ENCODE measurements at regions of chr7 and their contacts with region 1.

Region 1: GRCh38 chr7:107563775-107564552 is at the starts of genes COG5 and DUS4L:
- DNase-seq: peak; percentile 58 to 78
- H3K4me3 ChIP-seq: peak within 1 kb of the TSS; percentile 92
- H3K27ac ChIP-seq: peak within 1 kb of the TSS; percentile 89
- H3K4me1 ChIP-seq: peaks cover 41% of the 10 kb centered on the region
- H3K27me3 ChIP-seq: no peaks in the 10 kb centered on the region
- CTCF ChIP-seq: no peak
- total RNA-seq, gene COG5: 32.3 and 43.5 TPM in 2 replicates
- total RNA-seq, gene DUS4L: 22.0 and 25.2 TPM in 2 replicates

Region 2: GRCh38 chr7:107168233-107169119 is 395.5 kb before region 1 on chr7 and contains the start of gene HBP1:
- CTCF ChIA-PET with region 1: no interaction called
- POLR2A ChIA-PET with region 1: interaction called, 12 read pairs
- intact Hi-C with region 1: no loop called
- DNase-seq: peak; percentile 99
- H3K4me3 ChIP-seq: peak within 1 kb of the TSS; percentile 77
- H3K27ac ChIP-seq: peak within 1 kb of the TSS; percentile 86
- H3K4me1 ChIP-seq: peaks cover 26% of the 10 kb centered on the region
- H3K27me3 ChIP-seq: no peaks in the 10 kb centered on the region
- CTCF ChIP-seq: no peak
- total RNA-seq, gene HBP1: 60.0 and 62.1 TPM in 2 replicates

Region 3: GRCh38 chr7:107462740-107463444 is 101.1 kb before region 1 on chr7:
- CTCF ChIA-PET with region 1: no interaction called
- POLR2A ChIA-PET with region 1: no interaction called
- intact Hi-C with region 1: loop called (anchors 5 kb)
- DNase-seq: peak; percentile 60 to 65
- H3K4me3 ChIP-seq: no peak overlapping the region
- H3K27ac ChIP-seq: no peak overlapping the region
- H3K4me1 ChIP-seq: peaks cover 8% of the 10 kb centered on the region
- H3K27me3 ChIP-seq: no peaks in the 10 kb centered on the region
- CTCF ChIP-seq: peak; percentile 90

Region 4: DNA sequence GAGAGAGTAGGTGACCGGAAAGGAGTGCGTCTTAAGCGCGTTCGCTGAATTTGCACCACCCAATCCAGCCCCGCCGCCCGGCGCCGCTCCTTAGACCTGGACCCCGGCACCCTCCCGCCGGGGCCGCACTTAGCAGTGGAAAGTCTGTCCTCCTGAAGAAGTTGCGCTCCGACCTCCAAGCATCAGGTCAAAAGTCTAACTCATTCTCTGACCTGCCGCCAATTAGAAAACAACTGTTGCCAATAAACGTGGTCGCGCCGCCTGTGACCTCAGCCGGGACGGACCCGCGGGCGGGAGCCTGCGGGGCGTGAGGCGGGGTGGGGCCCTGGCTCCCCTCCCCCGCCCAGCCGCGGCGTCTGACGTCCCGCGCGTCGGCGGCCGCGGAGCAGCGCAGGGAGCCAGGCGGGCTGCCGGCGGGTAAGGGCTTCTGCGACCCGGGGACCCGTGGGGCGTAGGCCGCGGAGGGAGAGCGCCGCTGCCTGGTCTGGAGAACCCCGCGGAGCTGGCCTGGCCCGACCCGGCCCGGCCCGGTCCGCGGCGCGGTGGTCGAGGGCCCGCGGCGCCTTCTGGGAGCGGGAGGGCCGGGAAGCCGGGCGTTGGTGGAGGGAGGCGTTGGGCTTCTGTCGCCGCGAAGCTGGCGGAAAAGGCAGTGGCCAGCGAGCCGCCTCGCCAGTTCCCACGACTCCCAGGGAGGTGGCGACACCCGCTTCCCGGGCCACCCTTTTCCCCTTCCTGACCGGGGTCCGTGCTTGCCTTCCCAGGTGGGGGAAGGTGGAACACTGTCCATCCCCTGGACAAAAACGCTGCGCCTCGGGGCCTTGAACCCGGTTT is 16.1 kb after region 1 on chr7 and contains the start of gene BCAP29:
- CTCF ChIA-PET with region 1: no interaction called
- POLR2A ChIA-PET with region 1: interaction called, 9 read pairs
- intact Hi-C with region 1: loop called (anchors 1 kb)
- DNase-seq: peak; percentile 62 to 81
- H3K4me3 ChIP-seq: peak within 1 kb of the TSS; percentile 89
- H3K27ac ChIP-seq: peak within 1 kb of the TSS; percentile 69
- H3K4me1 ChIP-seq: peaks cover 25% of the 10 kb centered on the region
- H3K27me3 ChIP-seq: no peaks in the 10 kb centered on the region
- CTCF ChIP-seq: 0 out of 2 replicates have a peak, but pooled peaks have one; percentile 28
- total RNA-seq, gene BCAP29: 45.5 and 58.3 TPM in 2 replicates

Region 5: DNA sequence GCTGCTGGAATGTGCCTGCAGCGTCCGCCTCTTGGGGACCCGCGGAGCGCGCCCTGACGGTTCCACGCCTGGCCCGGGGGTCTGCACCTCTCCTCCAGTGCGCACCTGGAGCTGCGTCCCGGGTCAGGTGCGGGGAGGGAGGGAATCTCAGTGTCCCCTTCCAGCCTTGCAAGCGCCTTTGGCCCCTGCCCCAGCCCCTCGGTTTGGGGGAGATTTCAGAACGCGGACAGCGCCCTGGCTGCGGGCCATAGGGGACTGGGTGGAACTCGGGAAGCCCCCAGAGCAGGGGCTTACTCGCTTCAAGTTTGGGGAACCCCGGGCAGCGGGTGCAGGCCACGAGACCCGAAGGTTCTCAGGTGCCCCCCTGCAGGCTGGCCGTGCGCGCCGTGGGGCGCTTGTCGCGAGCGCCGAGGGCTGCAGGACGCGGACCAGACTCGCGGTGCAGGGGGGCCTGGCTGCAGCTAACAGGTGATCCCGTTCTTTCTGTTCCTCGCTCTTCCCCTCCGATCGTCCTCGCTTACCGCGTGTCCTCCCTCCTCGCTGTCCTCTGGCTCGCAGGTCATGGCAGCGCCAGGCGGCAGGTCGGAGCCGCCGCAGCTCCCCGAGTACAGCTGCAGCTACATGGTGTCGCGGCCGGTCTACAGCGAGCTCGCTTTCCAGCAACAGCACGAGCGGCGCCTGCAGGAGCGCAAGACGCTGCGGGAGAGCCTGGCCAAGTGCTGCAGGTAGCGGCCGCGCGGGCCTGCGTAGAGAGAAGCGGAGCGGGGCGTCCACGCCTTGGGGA is 97.3 kb after region 1 on chr7:
- CTCF ChIA-PET with region 1: interaction called, 3 read pairs
- POLR2A ChIA-PET with region 1: no interaction called
- intact Hi-C with region 1: loop called (anchors 5 kb)
- DNase-seq: peak; percentile 40 to 69
- H3K4me3 ChIP-seq: peak overlapping the region; percentile 58
- H3K27ac ChIP-seq: no peak overlapping the region
- H3K4me1 ChIP-seq: peaks cover 4% of the 10 kb centered on the region; the same call in 1 of the 2 replicates
- H3K27me3 ChIP-seq: no peaks in the 10 kb centered on the region
- CTCF ChIP-seq: no peak